Left ventricle myocardium inferior (tissue), 1 donor: ENCODE measurements at regions of chr3 and their contacts with region 1.

Region 1: DNA sequence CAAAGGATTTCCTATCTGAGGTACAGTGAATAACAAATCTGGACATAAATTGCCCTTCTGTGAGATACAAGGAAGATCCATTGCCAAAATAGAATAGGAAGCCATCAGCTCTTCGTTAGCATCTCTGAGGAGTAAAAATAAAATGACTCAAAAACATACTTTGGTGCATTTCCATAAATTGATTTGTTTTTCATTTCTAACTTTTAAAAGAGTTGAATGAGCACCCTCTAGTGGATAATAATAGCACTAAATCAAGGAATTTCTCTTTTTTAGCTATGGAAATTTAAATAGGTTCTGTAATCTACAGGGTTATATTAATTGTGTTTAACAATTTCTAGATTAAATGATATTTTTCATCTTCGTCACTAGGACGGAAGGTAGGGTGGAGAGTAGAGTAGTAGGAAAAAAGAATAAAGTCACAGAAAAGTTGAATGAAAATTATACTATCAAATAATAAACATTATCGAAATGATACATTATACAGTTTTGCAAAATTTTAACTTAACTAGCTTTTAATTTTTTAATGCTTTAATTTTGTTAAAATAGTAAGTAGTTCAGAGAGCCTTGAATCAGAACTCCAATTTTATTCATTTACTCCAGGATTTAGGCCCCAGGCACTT is 6.4 kb downstream of the NSUN3 start:
- DNase-seq: no peak
- H3K4me3 ChIP-seq: no peak overlapping the region
- H3K27ac ChIP-seq: no peak overlapping the region
- H3K4me1 ChIP-seq: peaks cover 20% of the 10 kb centered on the region
- H3K27me3 ChIP-seq: no peaks in the 10 kb centered on the region
- CTCF ChIP-seq: peak; percentile 68

Region 2: DNA sequence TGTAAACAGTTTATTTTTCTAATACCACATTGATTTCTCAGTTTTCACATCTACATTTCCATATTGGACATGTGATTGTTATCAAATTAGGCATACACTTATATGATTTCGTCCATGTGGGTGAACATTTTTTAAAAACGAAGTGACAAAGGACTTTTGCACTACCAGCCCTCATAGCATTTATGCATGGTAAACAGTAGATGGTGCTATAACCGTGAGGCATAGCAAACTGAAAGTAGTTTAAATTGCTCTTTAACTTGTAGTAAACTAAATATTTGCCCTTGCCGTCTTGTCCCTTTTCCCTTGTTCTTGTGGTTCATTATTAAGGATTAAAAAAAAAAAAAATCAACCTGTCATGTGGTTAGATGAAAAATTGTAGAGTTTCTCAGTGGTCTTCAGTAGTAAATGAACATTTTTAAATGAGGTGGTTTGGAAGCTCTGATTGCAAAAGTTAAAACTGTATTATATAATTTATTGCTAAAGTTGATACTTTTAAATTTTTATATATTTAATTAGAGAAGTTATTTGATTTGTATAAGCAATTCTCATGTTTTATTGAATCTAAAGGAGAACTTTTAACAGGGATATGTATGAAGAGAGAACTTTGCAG is 64.9 kb before region 1 on chr3:
- intact Hi-C with region 1: loop called (anchors 5 kb)
- DNase-seq: no peak
- H3K4me3 ChIP-seq: peak overlapping the region; percentile 56
- H3K27ac ChIP-seq: peak overlapping the region; percentile 13
- H3K4me1 ChIP-seq: peaks cover 17% of the 10 kb centered on the region
- H3K27me3 ChIP-seq: no peaks in the 10 kb centered on the region
- CTCF ChIP-seq: peak; percentile 88